ENCODE measurements at regions of chr12 and their contacts with region 1.

Region 1: DNA sequence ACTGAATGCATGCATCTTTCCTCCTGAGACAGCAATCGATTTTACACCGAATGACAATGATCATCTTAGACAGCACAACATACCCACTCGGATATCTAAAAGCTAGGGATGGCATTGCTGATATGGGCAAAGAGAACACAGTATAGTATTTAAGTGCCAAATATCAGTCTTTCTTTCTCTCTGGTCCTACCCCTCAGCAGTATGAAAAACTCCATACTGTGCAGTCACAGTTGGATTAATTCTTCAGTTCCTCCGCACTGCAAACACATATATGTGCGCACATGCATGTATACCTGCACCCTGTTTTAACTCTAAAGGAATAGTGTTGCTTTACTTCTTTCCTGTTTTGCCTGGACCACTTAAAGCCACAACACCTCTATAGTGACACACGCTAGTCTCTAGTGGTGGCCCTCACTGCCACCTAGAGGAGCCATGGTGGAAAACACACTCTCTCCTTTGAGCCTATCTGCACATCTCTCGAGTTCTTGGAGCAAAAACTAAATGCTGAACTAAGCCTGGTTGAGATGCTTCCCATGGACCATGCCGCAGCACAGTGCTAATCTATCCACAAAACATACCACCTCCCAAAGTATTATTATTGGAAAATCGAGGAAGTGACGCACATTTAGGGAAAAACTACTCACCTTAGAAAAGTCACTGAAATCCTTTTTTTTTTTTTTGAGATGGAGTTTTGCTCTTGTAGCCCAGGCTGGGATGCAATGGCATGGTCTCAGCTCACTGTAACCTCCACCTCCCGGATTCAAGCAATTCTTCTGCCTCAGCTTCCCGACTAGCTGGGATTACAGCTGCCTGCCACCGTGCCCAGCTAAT is 11.9 kb downstream of the TMEM52B start:
- DNase-seq: peak; percentile 68
- ATAC-seq: peak; percentile 100
- H3K4me3 Mint-ChIP-seq: no peak overlapping the region
- H3K27ac Mint-ChIP-seq: no peak overlapping the region
- H3K4me1 Mint-ChIP-seq: no peaks in the 10 kb centered on the region
- H3K27me3 Mint-ChIP-seq: peaks cover 11% of the 10 kb centered on the region

Region 2: DNA sequence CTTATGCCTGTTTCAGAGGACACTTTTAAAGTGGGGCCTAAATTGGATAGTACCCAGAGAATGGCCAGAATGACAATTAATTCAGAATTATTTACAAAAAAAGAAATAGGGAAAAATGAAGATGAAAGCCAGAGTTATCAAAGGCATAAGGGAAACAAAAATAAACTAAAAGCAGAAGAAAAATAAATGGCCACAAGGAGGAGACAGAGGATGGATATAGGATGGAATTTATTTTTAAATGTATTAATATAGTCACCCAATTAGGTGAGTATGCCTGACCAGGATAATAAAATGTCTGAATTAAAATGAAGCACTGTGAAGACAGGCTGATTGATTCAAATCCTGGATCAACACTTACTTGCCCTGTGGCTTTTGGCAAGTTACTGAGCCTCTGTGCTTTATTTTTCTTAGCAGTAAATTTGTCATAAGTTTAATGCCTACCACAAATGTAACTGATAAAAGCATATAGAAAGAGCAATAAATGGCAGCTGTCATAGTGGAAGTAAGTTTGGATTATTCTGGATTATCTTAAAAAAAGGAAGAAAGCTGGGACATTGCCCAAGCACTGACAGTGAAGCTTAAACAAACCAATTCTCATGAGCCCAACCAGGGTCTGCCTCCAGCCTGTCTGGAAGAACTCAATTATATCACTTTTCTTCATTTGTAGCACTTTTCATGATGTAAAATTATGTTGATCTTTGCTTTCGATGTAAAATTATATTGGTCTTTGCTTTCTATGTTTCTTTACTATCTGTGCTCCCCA is 156.8 kb before region 1 on chr12:
- CTCF ChIA-PET with region 1: no interaction called
- POLR2A ChIA-PET with region 1: no interaction called
- intact Hi-C with region 1: loop called in 1 of 2 experiments (anchors 2 kb)
- DNase-seq: no peak
- ATAC-seq: no peak
- H3K4me3 Mint-ChIP-seq: no peak overlapping the region
- H3K27ac Mint-ChIP-seq: no peak overlapping the region
- H3K4me1 Mint-ChIP-seq: no peaks in the 10 kb centered on the region
- H3K27me3 Mint-ChIP-seq: peaks cover 2% of the 10 kb centered on the region

Region 3: GRCh38 chr12:10119066-10119465 is 71.7 kb before region 1 on chr12:
- CTCF ChIA-PET with region 1: no interaction called
- POLR2A ChIA-PET with region 1: interaction called, 10 read pairs
- intact Hi-C with region 1: no loop called
- DNase-seq: no peak
- ATAC-seq: no peak
- H3K4me3 Mint-ChIP-seq: no peak overlapping the region
- H3K27ac Mint-ChIP-seq: no peak overlapping the region
- H3K4me1 Mint-ChIP-seq: no peaks in the 10 kb centered on the region
- H3K27me3 Mint-ChIP-seq: no peaks in the 10 kb centered on the region

Region 4: DNA sequence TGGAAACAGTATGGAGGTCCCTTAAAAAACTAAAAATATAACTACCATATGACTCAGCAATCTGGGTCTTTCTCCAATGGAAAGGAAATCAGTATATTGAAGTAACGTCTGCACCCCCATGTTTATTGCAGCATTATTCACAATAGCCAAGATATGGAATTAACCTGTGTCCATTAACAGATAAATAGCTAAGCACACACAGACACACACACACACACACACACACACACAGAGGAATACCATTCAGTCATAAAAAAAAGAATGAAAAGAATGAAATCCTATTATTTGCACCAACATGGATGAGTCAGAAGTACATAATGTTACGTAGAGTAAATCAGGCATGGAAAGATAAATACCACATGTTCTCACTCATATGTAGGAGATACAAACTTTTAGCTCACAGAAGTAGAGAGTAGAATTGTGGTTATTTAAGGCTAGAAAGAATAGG is 194.4 kb after region 1 on chr12:
- CTCF ChIA-PET with region 1: no interaction called
- POLR2A ChIA-PET with region 1: no interaction called
- intact Hi-C with region 1: no loop called
- DNase-seq: no peak
- ATAC-seq: no peak
- H3K4me3 Mint-ChIP-seq: no peak overlapping the region
- H3K27ac Mint-ChIP-seq: no peak overlapping the region
- H3K4me1 Mint-ChIP-seq: peaks cover 4% of the 10 kb centered on the region
- H3K27me3 Mint-ChIP-seq: peaks cover 11% of the 10 kb centered on the region